Activated CD4-positive, alpha-beta T cell treated with anti-CD3 and anti-CD28 coated beads for 36 hours (primary cell): ENCODE measurements at regions of chr6 and their contacts with region 1.

Region 1: GRCh38 chr6:122143813-122144601 is 255.4 kb upstream of the HSF2 start:
- DNase-seq: no peak
- ATAC-seq: no peak
- H3K4me3 Mint-ChIP-seq: no peak overlapping the region
- H3K27ac Mint-ChIP-seq: no peak overlapping the region
- H3K4me1 Mint-ChIP-seq: no peaks in the 10 kb centered on the region
- H3K27me3 Mint-ChIP-seq: peaks cover 2% of the 10 kb centered on the region

Region 2: DNA sequence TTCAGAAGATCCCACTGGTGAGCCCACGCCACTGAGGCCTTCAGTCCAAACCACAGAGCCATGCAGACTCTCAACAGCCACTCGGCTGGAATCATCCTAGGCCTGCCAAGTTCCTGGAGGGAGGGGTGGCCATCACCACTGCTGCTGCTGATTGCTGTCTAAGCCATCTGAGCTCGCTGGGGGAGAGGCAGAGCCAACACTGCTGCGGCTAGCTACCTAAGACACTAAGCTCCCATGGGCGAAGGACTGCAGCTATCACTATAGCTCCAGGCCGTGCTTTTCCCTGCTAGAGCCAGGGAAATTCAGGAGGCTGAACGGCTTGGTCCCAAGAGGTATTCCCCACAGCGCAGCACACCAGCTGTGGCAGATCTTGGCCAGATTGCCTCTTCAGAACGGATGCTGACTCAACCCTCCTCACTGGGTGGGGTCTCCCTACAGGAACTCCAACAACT is 883.3 kb before region 1 on chr6:
- CTCF ChIA-PET with region 1: no interaction called
- POLR2A ChIA-PET with region 1: no interaction called
- intact Hi-C with region 1: loop called in 1 of 2 experiments (anchors 5 kb)
- DNase-seq: no peak
- ATAC-seq: no peak
- H3K4me3 Mint-ChIP-seq: no peak overlapping the region
- H3K27ac Mint-ChIP-seq: no peak overlapping the region
- H3K4me1 Mint-ChIP-seq: no peaks in the 10 kb centered on the region
- H3K27me3 Mint-ChIP-seq: no peaks in the 10 kb centered on the region

Region 3: GRCh38 chr6:122264557-122264956 is 120.5 kb after region 1 on chr6:
- CTCF ChIA-PET with region 1: no interaction called
- POLR2A ChIA-PET with region 1: no interaction called
- intact Hi-C with region 1: no loop called
- DNase-seq: no peak
- ATAC-seq: no peak
- H3K4me3 Mint-ChIP-seq: no peak overlapping the region
- H3K27ac Mint-ChIP-seq: no peak overlapping the region
- H3K4me1 Mint-ChIP-seq: no peaks in the 10 kb centered on the region
- H3K27me3 Mint-ChIP-seq: peaks cover 2% of the 10 kb centered on the region